Left cardiac atrium (tissue), 4 donors: ENCODE measurements at regions of chr16 and their contacts with region 1.

Region 1: DNA sequence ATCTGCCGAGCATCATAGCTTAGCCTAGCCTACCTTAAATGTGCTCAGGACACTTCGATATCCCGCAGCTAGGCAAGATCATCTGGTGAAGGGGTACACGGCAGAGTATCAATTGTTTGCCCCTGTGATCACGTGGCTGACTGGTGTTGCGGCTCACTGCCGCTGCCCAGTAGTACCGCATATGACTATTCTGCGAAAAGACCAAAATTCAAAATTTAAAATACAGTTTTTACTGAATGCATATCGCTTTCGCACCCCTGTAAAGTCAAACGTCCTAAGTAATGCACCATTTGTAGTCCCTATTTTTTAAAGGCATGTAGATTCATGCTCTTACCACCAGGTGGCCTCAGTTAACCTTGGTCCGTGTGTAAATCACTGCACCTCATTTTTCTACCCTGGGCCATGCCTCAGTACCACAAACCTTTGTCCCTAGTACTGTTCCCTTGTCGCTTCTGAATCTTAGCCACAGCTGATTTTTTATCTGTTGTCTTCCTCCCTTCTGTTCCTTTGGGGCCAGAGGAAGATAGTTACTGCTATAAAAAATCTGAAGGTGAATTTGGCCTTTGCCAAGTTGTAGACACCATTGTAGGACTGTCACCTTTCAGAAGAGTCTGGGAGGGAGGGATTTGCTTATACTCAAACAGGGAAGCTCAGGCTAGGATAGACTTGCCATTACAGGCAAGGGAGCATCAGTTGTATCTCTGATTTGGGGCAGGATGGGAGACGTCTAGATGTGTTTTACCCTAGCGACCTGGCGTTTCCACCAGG is 34.4 kb downstream of the WWP2 start:
- DNase-seq: no peak
- ATAC-seq: peak; percentile 86 to 92

Region 2: GRCh38 chr16:69861292-69862030 is 64.9 kb after region 1 on chr16:
- intact Hi-C with region 1: loop called in 1 of 2 experiments (anchors 5 kb)
- DNase-seq: peak; percentile 55
- ATAC-seq: peak; percentile 81 to 87

Region 3: DNA sequence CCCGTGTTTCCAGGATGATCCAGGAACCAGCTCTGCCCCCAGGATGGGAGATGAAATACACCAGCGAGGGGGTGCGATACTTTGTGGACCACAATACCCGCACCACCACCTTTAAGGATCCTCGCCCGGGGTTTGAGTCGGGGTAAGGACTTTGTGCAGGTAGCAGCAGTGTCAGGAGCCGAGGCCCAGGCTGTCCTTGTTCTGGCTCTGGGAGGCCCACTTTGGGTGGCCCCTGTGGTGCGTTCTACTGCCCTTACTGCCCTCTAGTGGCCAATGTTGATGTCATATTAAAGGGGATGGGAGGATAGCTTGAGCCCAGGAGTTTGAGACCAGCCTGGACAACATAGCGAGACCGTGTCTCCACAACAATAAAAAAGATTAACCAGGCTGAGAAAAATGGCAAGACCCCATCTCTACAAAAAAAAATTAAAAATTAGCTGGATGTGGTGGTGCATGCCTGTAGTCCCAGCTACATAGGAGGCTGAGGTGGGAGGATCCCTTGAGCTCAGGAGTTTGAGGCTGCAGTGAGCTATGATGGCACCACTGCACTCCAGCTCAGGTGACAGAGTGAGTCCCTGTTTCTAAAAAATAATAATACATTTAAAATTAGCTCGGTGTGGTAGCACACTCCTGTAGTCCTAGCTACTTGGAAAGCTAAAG is 133.7 kb after region 1 on chr16:
- intact Hi-C with region 1: loop called (anchors 1 to 5 kb)
- DNase-seq: peak; percentile 55
- ATAC-seq: peak; percentile 68 to 69